ENCODE measurements at regions of chr7 and their contacts with region 1.

Region 1: GRCh38 chr7:30938435-30939316 is 25.1 kb upstream of the GHRHR start:
- DNase-seq: peak; percentile 79
- H3K4me3 Mint-ChIP-seq: no peak overlapping the region
- H3K27ac Mint-ChIP-seq: no peak overlapping the region
- H3K4me1 Mint-ChIP-seq: no peaks in the 10 kb centered on the region
- H3K27me3 Mint-ChIP-seq: peaks cover 21% of the 10 kb centered on the region

Region 2: GRCh38 chr7:30702200-30702599 is 236.5 kb before region 1 on chr7:
- CTCF ChIA-PET with region 1: no interaction called
- intact Hi-C with region 1: no loop called
- DNase-seq: peak; percentile 61
- H3K4me3 Mint-ChIP-seq: no peak overlapping the region
- H3K27ac Mint-ChIP-seq: no peak overlapping the region
- H3K4me1 Mint-ChIP-seq: peaks cover 4% of the 10 kb centered on the region
- H3K27me3 Mint-ChIP-seq: no peaks in the 10 kb centered on the region

Region 3: DNA sequence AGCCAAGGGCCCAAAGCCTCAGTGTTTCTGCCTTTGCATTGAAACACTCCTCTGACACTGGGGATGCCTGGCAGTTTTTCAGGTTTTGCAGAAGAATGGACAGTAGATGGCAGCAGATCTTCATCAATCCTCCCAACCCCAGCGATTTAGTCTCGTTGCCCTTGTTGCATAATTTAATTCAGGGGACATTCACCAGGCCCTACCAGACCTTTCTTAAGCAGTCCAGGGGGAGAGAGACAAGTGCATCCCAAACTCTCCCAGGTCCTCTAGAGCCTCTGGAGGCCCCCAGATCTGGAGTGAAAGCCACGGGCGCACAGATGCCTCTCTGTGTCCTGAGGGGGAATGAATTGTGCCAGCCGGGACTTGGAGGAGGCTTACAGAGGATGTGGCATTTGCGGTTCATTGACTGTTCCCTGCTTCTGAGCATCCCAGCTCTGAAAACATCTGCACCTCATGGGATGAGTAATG is 137.9 kb before region 1 on chr7:
- CTCF ChIA-PET with region 1: interaction called, 5 read pairs
- intact Hi-C with region 1: loop called (anchors 10 kb)
- DNase-seq: peak; percentile 56
- H3K4me3 Mint-ChIP-seq: no peak overlapping the region
- H3K27ac Mint-ChIP-seq: no peak overlapping the region
- H3K4me1 Mint-ChIP-seq: peaks cover 13% of the 10 kb centered on the region
- H3K27me3 Mint-ChIP-seq: no peaks in the 10 kb centered on the region

Region 4: GRCh38 chr7:30965372-30965771 is 26.7 kb after region 1 on chr7:
- CTCF ChIA-PET with region 1: interaction called, 36 read pairs
- intact Hi-C with region 1: no loop called
- DNase-seq: no peak
- H3K4me3 Mint-ChIP-seq: no peak overlapping the region
- H3K27ac Mint-ChIP-seq: no peak overlapping the region
- H3K4me1 Mint-ChIP-seq: no peaks in the 10 kb centered on the region
- H3K27me3 Mint-ChIP-seq: peaks cover 9% of the 10 kb centered on the region

Region 5: DNA sequence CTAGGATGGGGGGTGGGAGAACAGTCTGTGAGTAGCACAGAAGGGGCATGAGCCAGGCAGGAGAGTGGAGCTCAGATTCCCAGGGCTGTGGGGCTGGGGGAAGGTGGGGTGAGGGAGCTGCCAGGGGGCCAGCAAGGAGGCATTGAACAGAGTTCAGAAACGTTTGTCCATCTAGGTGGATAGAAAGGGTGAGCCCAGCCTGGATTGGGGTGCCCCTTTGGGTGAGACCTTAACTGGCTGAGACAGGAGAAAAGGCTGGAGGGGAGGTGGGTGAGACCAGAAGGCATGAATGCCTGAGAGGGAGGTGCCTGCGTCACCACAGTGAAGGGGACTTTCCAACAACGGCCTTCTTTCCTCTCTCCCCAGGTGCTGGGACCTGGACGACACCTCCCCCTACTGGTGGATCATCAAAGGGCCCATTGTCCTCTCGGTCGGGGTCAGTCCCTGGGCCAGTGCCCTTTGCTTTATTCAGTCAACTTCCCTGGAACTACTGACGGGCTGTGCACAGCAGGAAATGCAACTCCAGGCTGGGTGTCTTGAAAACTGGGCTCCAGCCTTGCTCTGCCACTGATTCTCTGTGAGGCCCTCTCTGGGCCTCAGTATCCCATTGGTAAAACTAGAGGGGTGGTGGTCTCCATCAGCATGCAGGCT is 36.1 kb after region 1 on chr7:
- CTCF ChIA-PET with region 1: interaction called, 36 read pairs
- intact Hi-C with region 1: loop called (anchors 1 kb)
- DNase-seq: peak; percentile 84
- H3K4me3 Mint-ChIP-seq: no peak overlapping the region
- H3K27ac Mint-ChIP-seq: no peak overlapping the region
- H3K4me1 Mint-ChIP-seq: no peaks in the 10 kb centered on the region
- H3K27me3 Mint-ChIP-seq: peaks cover 27% of the 10 kb centered on the region

Region 6: GRCh38 chr7:30983042-30983913 is 44.6 kb after region 1 on chr7:
- CTCF ChIA-PET with region 1: interaction called, 30 read pairs
- intact Hi-C with region 1: no loop called
- DNase-seq: peak; percentile 85
- H3K4me3 Mint-ChIP-seq: no peak overlapping the region
- H3K27ac Mint-ChIP-seq: no peak overlapping the region
- H3K4me1 Mint-ChIP-seq: peaks cover 4% of the 10 kb centered on the region
- H3K27me3 Mint-ChIP-seq: peaks cover 45% of the 10 kb centered on the region

Region 7: DNA sequence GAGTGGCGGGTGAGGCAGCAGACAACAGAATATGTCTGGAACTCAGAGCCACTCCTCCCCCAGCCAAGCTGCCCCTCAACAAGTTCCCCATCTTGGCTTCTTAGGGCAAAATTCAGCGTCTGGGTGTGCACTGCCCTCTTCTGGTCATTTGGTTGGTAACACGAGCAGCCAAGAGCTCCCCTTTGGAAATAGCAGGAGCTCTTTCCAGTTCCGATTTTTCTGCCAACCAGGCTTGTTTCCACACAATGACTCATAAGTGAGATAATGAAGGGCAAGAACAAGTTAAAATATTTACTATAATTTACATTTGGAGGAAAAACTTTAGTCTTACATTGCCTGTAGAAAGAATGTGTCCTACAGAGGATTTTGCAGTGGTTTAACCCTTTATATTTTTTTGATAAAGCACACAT is 184.0 kb after region 1 on chr7:
- CTCF ChIA-PET with region 1: interaction called, 6 read pairs
- intact Hi-C with region 1: loop called (anchors 1 kb)
- DNase-seq: peak; percentile 64
- H3K4me3 Mint-ChIP-seq: no peak overlapping the region
- H3K27ac Mint-ChIP-seq: no peak overlapping the region
- H3K4me1 Mint-ChIP-seq: no peaks in the 10 kb centered on the region
- H3K27me3 Mint-ChIP-seq: peaks cover 2% of the 10 kb centered on the region

Region 8: GRCh38 chr7:31488562-31489203 is 550.0 kb after region 1 on chr7:
- CTCF ChIA-PET with region 1: no interaction called
- intact Hi-C with region 1: loop called (anchors 2 kb)
- DNase-seq: peak; percentile 52
- H3K4me3 Mint-ChIP-seq: no peak overlapping the region
- H3K27ac Mint-ChIP-seq: no peak overlapping the region
- H3K4me1 Mint-ChIP-seq: no peaks in the 10 kb centered on the region
- H3K27me3 Mint-ChIP-seq: no peaks in the 10 kb centered on the region

Region 9: DNA sequence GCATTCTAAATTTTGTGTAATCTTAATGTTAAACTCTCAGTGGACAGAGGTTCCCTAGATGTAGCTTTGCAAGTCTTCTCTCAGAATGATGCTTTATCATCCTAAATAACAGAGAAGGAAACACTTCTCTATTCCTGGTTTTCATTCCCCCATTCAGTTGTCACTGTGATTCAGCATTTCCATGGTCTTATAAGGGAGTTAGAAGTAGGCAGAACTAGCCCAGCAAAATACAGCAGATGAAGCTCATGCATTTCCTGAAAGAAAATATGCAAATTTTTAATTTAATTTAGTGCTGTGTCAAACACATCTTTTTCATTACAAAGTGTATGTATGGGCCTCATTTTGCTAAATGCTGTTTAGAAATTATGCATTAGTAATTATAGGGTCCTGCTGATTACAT is 645.3 kb after region 1 on chr7:
- CTCF ChIA-PET with region 1: no interaction called
- intact Hi-C with region 1: no loop called
- DNase-seq: no peak
- H3K4me3 Mint-ChIP-seq: no peak overlapping the region
- H3K27ac Mint-ChIP-seq: no peak overlapping the region
- H3K4me1 Mint-ChIP-seq: no peaks in the 10 kb centered on the region
- H3K27me3 Mint-ChIP-seq: no peaks in the 10 kb centered on the region

Measured in activated naive CD4-positive, alpha-beta T cell treated with anti-CD3 and anti-CD28 coated beads for 36 hours (primary cell).